WTC11 (cell line): ENCODE measurements at regions of chr17 and their contacts with region 1.

Region 1: GRCh38 chr17:62752198-62752597 is 55.9 kb downstream of the MARCHF10 start:
- DNase-seq: no peak
- ATAC-seq: no peak
- H3K4me3 Mint-ChIP-seq: no peak overlapping the region
- H3K27ac Mint-ChIP-seq: no peak overlapping the region
- H3K4me1 Mint-ChIP-seq: peaks cover 29% of the 10 kb centered on the region
- H3K27me3 Mint-ChIP-seq: no peaks in the 10 kb centered on the region; the same call in 1 of the 2 replicates
- CTCF ChIP-seq: no peak

Region 2: GRCh38 chr17:61770752-61771533 is 981.3 kb before region 1 on chr17:
- CTCF ChIA-PET with region 1: no interaction called
- POLR2A ChIA-PET with region 1: interaction called, 10 read pairs
- DNase-seq: no peak
- ATAC-seq: no peak
- H3K4me3 Mint-ChIP-seq: no peak overlapping the region
- H3K27ac Mint-ChIP-seq: no peak overlapping the region
- H3K4me1 Mint-ChIP-seq: no peaks in the 10 kb centered on the region
- H3K27me3 Mint-ChIP-seq: no peaks in the 10 kb centered on the region
- CTCF ChIP-seq: no peak

Region 3: GRCh38 chr17:62675260-62676100 is 76.7 kb before region 1 on chr17:
- CTCF ChIA-PET with region 1: no interaction called
- POLR2A ChIA-PET with region 1: no interaction called
- DNase-seq: no peak
- ATAC-seq: no peak
- H3K4me3 Mint-ChIP-seq: no peak overlapping the region
- H3K27ac Mint-ChIP-seq: no peak overlapping the region
- H3K4me1 Mint-ChIP-seq: no peaks in the 10 kb centered on the region
- H3K27me3 Mint-ChIP-seq: no peaks in the 10 kb centered on the region
- CTCF ChIP-seq: no peak

Region 4: DNA sequence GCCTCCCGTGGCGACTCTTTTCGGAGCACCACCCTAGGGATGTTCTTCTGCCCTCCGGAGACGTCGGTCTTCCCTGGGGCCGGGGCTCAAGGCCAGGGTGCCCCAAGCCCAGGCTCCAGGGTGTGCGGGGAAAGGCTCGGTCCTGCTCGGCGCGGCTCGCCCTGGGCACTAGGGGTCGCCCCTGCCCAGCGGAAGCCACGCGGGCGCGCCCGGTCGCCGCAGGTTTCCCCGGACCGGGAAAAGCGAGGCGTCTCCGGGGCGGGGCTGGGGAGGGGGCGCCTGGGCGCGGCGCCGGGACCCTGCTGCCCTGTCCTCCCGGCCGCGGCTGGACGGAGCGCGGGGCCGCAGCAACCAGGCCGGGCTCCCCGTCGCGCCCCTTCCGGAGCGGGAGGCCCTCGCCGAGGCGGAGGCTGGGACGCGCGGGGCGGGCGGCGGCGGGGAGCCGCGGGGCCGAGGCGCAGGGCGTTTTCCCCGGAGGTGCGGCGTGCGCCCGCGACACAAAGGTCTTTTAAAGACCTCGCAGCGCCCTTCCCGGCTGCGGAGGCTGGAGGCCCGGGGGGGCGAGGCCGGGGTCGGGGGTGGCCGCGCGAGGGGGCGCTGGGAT is 48.3 kb before region 1 on chr17:
- CTCF ChIA-PET with region 1: no interaction called
- POLR2A ChIA-PET with region 1: no interaction called
- DNase-seq: peak; percentile 88
- ATAC-seq: peak; percentile 75
- H3K4me3 Mint-ChIP-seq: peak overlapping the region; percentile 80
- H3K27ac Mint-ChIP-seq: no peak overlapping the region
- H3K4me1 Mint-ChIP-seq: peaks cover 30% of the 10 kb centered on the region
- H3K27me3 Mint-ChIP-seq: peaks cover 15% of the 10 kb centered on the region
- CTCF ChIP-seq: peak; percentile 74

Region 5: DNA sequence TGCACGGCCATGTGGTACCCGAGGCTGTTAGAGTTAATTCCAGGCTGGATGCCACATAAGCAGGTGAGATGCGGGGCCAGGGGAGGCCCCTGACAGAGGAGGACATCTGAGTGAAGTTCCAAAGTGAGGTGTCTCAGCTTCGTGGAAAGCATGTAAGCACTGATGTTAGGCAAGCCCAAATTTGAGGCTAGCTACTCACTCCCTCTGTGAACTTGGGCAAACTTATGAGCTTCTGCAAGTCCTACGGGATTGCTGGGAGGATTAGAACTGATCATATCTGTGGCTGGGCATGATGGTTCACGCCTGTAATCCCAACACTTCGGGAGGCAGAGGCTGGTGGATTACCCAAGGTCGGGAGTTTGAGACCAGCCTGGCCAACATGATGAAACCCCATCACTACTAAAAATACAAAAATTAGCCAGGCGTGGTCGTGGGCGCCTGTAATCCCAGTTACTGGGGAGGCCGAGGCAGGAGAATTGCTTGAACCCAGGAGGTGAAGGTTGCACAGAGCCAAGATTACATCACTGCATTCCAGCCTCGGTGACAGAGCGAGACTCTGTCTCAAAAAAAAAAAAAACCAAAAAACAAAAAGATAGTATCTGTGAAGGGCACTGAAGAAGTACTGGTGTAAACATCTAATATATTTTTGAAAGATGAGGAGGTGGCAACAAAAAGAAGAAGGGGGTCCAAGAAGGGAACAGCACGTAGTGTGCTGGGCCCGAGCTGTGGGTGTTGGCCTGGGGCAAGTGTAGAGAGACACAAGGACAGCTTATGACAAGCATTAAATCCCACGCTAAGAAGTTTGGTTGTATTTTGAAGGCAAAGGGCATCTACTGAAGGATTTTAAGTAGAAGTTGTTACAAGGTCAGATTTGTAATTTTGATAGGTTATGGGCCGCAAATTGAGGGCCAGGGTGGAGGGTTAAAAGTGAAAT is 95.5 kb after region 1 on chr17:
- CTCF ChIA-PET with region 1: no interaction called
- POLR2A ChIA-PET with region 1: no interaction called
- DNase-seq: no peak
- ATAC-seq: no peak
- H3K4me3 Mint-ChIP-seq: no peak overlapping the region
- H3K27ac Mint-ChIP-seq: no peak overlapping the region
- H3K4me1 Mint-ChIP-seq: no peaks in the 10 kb centered on the region
- H3K27me3 Mint-ChIP-seq: no peaks in the 10 kb centered on the region
- CTCF ChIP-seq: no peak